GM12878 (cell line): ENCODE measurements at regions of chr4 and their contacts with region 1.

Region 1: DNA sequence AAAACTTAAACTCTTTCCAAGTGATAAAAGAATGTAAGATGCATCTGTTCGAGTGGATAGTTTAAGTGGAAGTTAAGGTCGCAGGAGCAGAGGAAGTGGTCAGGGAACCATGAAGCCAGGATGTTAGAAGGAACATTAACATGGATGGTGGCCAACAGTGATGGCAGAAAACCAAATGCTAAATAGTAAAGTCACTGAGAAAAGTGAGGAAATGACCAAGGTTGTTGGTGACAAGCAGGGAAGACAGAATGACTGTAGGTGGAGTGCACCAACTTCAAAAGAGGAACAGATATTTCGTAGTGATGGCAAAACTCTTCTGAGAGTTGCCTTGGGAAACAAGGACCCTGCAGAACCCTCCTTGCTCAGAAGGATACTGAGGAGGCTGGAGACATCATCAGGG is 226.2 kb downstream of the PALLD start:
- DNase-seq: no peak
- ATAC-seq: peak; percentile 63
- H3K4me3 ChIP-seq: no peak overlapping the region
- H3K27ac ChIP-seq: no peak overlapping the region
- H3K4me1 ChIP-seq: no peaks in the 10 kb centered on the region
- H3K27me3 ChIP-seq: no peaks in the 10 kb centered on the region
- CTCF ChIP-seq: no peak; a peak in 1 of 6 replicates
- EP300 ChIP-seq: peak in 1 of 2 experiments; percentile 39; a peak in 1 of 4 replicates
- POLR2A ChIP-seq: no peak
- RAD21 ChIP-seq: no peak

Region 2: DNA sequence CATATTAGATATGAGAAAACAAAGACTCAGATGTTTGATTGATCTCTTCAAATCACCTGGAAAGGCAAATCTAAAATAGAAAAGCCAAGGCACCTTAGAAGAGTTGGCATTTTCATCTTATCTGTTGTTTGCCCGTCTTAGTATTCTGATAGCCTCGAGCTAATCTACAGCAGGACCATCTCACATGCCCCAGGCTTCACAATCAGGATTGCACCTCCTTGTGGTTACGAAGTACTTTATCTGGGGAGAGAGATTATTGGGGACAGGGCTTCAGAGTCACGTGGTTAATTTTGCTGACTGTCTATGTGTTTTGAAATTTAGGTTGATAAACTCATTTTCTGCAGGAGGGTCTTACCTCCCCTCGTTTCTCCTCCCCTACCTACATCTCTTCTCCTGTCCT is 943.7 kb before region 1 on chr4:
- CTCF ChIA-PET with region 1: no interaction called
- POLR2A ChIA-PET with region 1: no interaction called
- RAD21 ChIA-PET with region 1: no interaction called
- SMC1A ChIA-PET with region 1: no interaction called
- in situ Hi-C with region 1: no loop called
- intact Hi-C with region 1: no loop called
- DNase-seq: no peak
- ATAC-seq: no peak; the same call in 2 of the 3 replicates
- H3K4me3 ChIP-seq: no peak overlapping the region
- H3K27ac ChIP-seq: no peak overlapping the region
- H3K4me1 ChIP-seq: no peaks in the 10 kb centered on the region
- H3K27me3 ChIP-seq: no peaks in the 10 kb centered on the region
- CTCF ChIP-seq: no peak
- EP300 ChIP-seq: no peak
- POLR2A ChIP-seq: no peak
- RAD21 ChIP-seq: no peak

Region 3: GRCh38 chr4:168748807-168749206 is 25.8 kb after region 1 on chr4:
- CTCF ChIA-PET with region 1: no interaction called
- POLR2A ChIA-PET with region 1: no interaction called
- RAD21 ChIA-PET with region 1: no interaction called
- SMC1A ChIA-PET with region 1: no interaction called
- in situ Hi-C with region 1: no loop called
- intact Hi-C with region 1: no loop called
- DNase-seq: no peak
- ATAC-seq: no peak
- H3K4me3 ChIP-seq: no peak overlapping the region
- H3K27ac ChIP-seq: no peak overlapping the region
- H3K4me1 ChIP-seq: no peaks in the 10 kb centered on the region
- H3K27me3 ChIP-seq: no peaks in the 10 kb centered on the region
- CTCF ChIP-seq: no peak
- EP300 ChIP-seq: no peak
- POLR2A ChIP-seq: no peak
- RAD21 ChIP-seq: no peak

Region 4: DNA sequence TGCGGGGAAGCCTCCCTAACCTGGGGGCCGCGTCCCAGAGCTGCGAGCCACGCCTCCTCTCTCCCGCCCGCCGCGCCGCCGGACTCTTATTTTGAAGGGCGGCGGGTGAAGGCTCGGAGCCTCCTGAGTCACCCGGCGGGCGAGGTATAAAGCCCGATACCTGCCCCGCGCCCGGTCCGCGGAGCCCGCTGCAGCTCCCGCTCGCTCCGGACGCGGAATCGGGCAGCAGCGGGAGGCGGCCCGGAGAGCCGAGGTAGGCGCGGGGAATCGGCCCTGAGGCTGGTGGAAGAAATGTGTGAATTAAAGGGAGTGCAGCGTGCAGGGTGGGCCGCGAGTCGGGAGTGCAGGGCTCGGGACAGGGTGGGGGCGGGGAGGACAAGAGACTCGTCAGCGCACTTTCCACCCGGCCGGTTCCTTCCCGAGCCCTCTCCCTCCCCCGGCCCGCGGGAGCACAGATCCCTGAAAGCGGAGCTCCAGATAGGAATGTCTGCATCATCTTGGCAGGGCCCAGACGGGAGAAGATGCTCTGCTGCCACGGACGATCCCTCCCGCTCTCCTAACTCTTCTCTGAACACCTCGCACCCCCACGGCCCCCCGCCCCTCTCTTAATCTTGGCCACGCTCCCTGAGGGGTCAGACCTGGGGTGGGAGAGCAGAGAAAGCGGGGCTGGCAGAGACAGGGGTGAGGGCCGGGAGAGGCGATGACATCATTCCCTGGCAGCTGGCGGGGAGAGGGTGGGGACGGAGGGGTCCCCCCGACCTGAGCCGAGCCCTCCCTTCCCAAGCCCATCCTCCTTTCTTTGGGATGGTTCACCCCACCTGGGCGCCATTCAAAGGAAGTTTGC is 109.1 kb after region 1 on chr4:
- CTCF ChIA-PET with region 1: no interaction called
- POLR2A ChIA-PET with region 1: no interaction called
- RAD21 ChIA-PET with region 1: no interaction called
- SMC1A ChIA-PET with region 1: interaction called, 3 read pairs
- in situ Hi-C with region 1: no loop called
- intact Hi-C with region 1: loop called (anchors 5 kb)
- DNase-seq: no peak
- ATAC-seq: peak; percentile 91
- H3K4me3 ChIP-seq: peak overlapping the region; percentile 59; the same call in 1 of the 2 replicates
- H3K27ac ChIP-seq: no peak overlapping the region
- H3K4me1 ChIP-seq: no peaks in the 10 kb centered on the region
- H3K27me3 ChIP-seq: peaks cover 2 to 14% of the 10 kb centered on the region in 2 experiments; a peak in 3 of 4 replicates
- CTCF ChIP-seq: no peak
- EP300 ChIP-seq: no peak; a peak in 1 of 4 replicates
- POLR2A ChIP-seq: no peak
- RAD21 ChIP-seq: no peak

Region 5: GRCh38 chr4:168853771-168854219 is 130.8 kb after region 1 on chr4:
- CTCF ChIA-PET with region 1: no interaction called
- POLR2A ChIA-PET with region 1: interaction called, 4 read pairs
- RAD21 ChIA-PET with region 1: interaction called, 3 read pairs
- SMC1A ChIA-PET with region 1: interaction called, 4 read pairs
- in situ Hi-C with region 1: no loop called
- intact Hi-C with region 1: loop called (anchors 5 kb)
- DNase-seq: peak; percentile 15
- ATAC-seq: peak; percentile 80
- H3K4me3 ChIP-seq: no peak overlapping the region
- H3K27ac ChIP-seq: no peak overlapping the region
- H3K4me1 ChIP-seq: peaks cover 8% of the 10 kb centered on the region
- H3K27me3 ChIP-seq: no peaks in the 10 kb centered on the region
- CTCF ChIP-seq: no peak
- EP300 ChIP-seq: no peak
- POLR2A ChIP-seq: no peak
- RAD21 ChIP-seq: no peak

Region 6: GRCh38 chr4:168907119-168907698 is 184.2 kb after region 1 on chr4:
- CTCF ChIA-PET with region 1: no interaction called
- POLR2A ChIA-PET with region 1: no interaction called
- RAD21 ChIA-PET with region 1: no interaction called
- SMC1A ChIA-PET with region 1: no interaction called
- in situ Hi-C with region 1: no loop called
- intact Hi-C with region 1: no loop called
- DNase-seq: no peak
- ATAC-seq: no peak
- H3K4me3 ChIP-seq: no peak overlapping the region
- H3K27ac ChIP-seq: no peak overlapping the region
- H3K4me1 ChIP-seq: no peaks in the 10 kb centered on the region
- H3K27me3 ChIP-seq: no peaks in the 10 kb centered on the region
- CTCF ChIP-seq: no peak
- EP300 ChIP-seq: no peak
- POLR2A ChIP-seq: no peak
- RAD21 ChIP-seq: no peak